Activated naive CD4-positive, alpha-beta T cell treated with anti-CD3 and anti-CD28 coated beads, Interleukin-2, amount 10 ng/mL, durations not matched to agents 7 days and 5 days (primary cell): ENCODE measurements at regions of chr20 and their contacts with region 1.

Region 1: GRCh38 chr20:43448748-43449535 is 8.8 kb upstream of the SRSF6 start:
- DNase-seq: peak; percentile 62
- H3K4me3 Mint-ChIP-seq: no peak overlapping the region
- H3K27ac Mint-ChIP-seq: no peak overlapping the region
- H3K4me1 Mint-ChIP-seq: no peaks in the 10 kb centered on the region
- H3K27me3 Mint-ChIP-seq: peaks cover 53% of the 10 kb centered on the region

Region 2: DNA sequence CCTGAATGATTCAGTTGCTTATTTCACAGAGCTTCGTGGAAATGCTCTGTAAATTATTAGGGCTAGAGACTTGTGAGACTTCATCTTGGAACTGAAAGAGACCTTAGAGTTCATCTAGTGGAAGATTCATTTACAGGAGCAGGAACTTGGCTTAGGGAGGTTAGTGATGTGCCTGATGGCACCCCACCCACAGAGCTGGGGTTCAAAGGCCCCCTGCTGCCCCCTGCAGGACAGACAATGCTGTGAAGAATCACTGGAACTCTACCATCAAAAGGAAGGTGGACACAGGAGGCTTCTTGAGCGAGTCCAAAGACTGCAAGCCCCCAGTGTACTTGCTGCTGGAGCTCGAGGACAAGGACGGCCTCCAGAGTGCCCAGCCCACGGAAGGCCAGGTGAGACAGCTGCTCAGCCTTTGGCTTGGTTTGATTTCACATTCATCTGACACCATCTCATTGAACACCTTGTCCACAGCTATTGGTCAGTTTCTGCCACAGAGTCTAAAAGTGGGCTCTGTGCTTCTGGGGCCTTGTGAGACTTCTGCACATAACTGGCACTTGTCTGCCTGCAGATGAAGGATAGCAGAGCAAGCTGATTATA is 243.1 kb after region 1 on chr20:
- CTCF ChIA-PET with region 1: interaction called, 24 read pairs
- DNase-seq: peak; percentile 76
- H3K4me3 Mint-ChIP-seq: no peak overlapping the region
- H3K27ac Mint-ChIP-seq: peak overlapping the region; percentile 45
- H3K4me1 Mint-ChIP-seq: no peaks in the 10 kb centered on the region
- H3K27me3 Mint-ChIP-seq: no peaks in the 10 kb centered on the region